GM12878 (cell line): ENCODE measurements at regions of chr3 and their contacts with region 1.

Region 1: DNA sequence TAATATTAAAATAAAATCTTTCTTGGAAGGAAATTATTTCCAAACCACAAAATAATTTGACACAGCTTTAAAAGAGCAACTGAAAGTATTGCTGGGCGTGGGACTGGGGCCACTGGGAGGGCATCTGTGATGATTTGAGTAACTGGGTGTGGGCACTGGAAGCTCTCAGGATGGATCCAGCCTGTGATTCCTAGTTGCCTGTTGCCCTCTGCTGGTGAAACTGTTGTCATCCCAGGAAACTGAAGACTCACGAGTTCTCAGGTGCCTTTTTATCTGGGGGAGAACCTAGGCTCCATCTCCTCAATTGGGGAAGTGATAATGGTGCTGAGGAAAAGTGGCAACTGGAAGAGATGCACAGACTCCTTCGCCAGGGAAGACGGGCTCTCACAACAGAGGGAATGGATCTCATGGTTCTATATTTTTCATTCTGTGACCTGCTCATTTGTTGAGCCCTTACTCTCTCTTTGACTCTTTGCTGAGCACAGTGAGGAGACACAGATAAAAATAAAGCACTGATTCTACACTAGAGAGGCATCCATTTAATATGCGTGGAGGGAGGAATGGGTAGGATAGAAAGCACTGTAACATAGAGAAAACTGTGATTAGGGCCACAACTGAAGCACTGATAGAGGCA is 61.6 kb downstream of the TPRG1 start:
- DNase-seq: no peak
- ATAC-seq: no peak; the same call in 2 of the 3 replicates
- H3K4me3 ChIP-seq: no peak overlapping the region
- H3K27ac ChIP-seq: no peak overlapping the region
- H3K4me1 ChIP-seq: no peaks in the 10 kb centered on the region
- H3K27me3 ChIP-seq: no peaks in the 10 kb centered on the region; a peak in 3 of 4 replicates
- CTCF ChIP-seq: peak; percentile 23 to 40 (median 33); a peak in 4 of 6 replicates
- EP300 ChIP-seq: no peak
- POLR2A ChIP-seq: no peak
- RAD21 ChIP-seq: peak; percentile 38

Region 2: GRCh38 chr3:188842639-188843038 is 390.7 kb before region 1 on chr3:
- CTCF ChIA-PET with region 1: no interaction called
- POLR2A ChIA-PET with region 1: no interaction called
- RAD21 ChIA-PET with region 1: no interaction called
- SMC1A ChIA-PET with region 1: no interaction called
- in situ Hi-C with region 1: no loop called
- intact Hi-C with region 1: no loop called
- DNase-seq: no peak
- ATAC-seq: no peak
- H3K4me3 ChIP-seq: no peak overlapping the region
- H3K27ac ChIP-seq: no peak overlapping the region
- H3K4me1 ChIP-seq: no peaks in the 10 kb centered on the region
- H3K27me3 ChIP-seq: no peaks in the 10 kb centered on the region
- CTCF ChIP-seq: no peak
- EP300 ChIP-seq: no peak
- POLR2A ChIP-seq: no peak
- RAD21 ChIP-seq: no peak

Region 3: GRCh38 chr3:189169728-189170127 is 63.6 kb before region 1 on chr3:
- CTCF ChIA-PET with region 1: no interaction called
- POLR2A ChIA-PET with region 1: no interaction called
- RAD21 ChIA-PET with region 1: no interaction called
- SMC1A ChIA-PET with region 1: no interaction called
- in situ Hi-C with region 1: no loop called
- intact Hi-C with region 1: loop called (anchors 10 kb)
- DNase-seq: no peak
- ATAC-seq: no peak
- H3K4me3 ChIP-seq: no peak overlapping the region
- H3K27ac ChIP-seq: no peak overlapping the region
- H3K4me1 ChIP-seq: no peaks in the 10 kb centered on the region
- H3K27me3 ChIP-seq: no peaks in the 10 kb centered on the region
- CTCF ChIP-seq: peak in 1 of 3 experiments; percentile 14; a peak in 1 of 6 replicates
- EP300 ChIP-seq: no peak
- POLR2A ChIP-seq: no peak
- RAD21 ChIP-seq: no peak